ENCODE measurements at regions of chr15 and their contacts with region 1.

Region 1: GRCh38 chr15:75597667-75598341 is 18.7 kb upstream of the PTPN9 start:
- DNase-seq: peak; percentile 65
- H3K4me3 Mint-ChIP-seq: no peak overlapping the region
- H3K27ac Mint-ChIP-seq: peak overlapping the region; percentile 43
- H3K4me1 Mint-ChIP-seq: peaks cover 18% of the 10 kb centered on the region
- H3K27me3 Mint-ChIP-seq: no peaks in the 10 kb centered on the region

Region 2: DNA sequence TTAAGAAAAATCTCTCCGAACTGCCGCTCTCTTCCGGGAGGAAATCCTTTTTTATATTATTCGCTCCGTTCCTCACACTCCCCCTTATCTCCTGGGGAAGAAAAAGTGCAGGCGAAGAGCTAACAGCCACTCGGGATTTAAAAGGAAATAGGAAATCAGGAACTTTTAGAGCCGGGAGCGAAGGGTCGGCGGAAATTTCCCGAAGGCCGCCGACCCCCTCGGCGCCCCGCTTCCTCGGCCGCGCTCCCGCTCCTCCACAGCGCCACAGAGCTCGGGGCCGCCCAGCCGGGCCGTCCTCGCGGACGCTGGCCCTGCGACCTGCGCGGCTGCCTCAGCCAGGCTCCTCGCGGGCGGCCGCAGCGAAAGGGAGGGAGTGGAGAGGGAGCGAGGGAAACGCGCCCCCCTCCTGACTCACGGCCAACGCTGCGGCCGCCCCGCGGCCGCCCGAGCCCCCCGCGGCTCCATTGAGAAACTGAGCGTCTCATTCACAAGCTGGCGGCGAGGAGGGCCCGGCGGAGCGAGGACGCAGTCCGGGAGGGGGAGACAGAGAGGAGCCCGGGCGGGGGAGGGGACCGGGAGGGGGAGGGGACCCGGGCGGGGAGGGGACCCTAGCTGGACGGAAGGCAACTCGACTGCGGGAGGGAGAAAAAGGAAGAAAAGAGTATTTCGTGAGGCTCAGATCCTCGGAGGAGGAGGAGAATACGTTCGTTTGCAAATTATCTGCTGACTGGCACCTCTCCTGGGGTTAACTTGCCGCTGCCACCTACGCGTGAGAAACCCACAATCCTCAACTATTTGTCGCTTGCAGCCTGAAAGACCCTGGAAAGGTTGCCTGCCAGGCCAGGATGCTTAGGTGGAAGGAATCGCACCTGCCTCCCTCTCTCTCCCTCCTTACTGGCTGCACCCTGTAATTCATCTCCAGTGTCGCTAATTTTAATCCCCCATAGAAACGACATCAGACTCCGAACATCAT is 18.6 kb before region 1 on chr15 and contains the start of gene PTPN9:
- CTCF ChIA-PET with region 1: interaction called, 17 read pairs
- POLR2A ChIA-PET with region 1: interaction called, 18 read pairs
- intact Hi-C with region 1: no loop called
- DNase-seq: peak; percentile 84
- H3K4me3 Mint-ChIP-seq: peak within 1 kb of the TSS; percentile 91
- H3K27ac Mint-ChIP-seq: peak within 1 kb of the TSS; percentile 93
- H3K4me1 Mint-ChIP-seq: peaks cover 16% of the 10 kb centered on the region
- H3K27me3 Mint-ChIP-seq: no peaks in the 10 kb centered on the region
- total RNA-seq, gene PTPN9: 19.2 to 20.9 TPM

Region 3: DNA sequence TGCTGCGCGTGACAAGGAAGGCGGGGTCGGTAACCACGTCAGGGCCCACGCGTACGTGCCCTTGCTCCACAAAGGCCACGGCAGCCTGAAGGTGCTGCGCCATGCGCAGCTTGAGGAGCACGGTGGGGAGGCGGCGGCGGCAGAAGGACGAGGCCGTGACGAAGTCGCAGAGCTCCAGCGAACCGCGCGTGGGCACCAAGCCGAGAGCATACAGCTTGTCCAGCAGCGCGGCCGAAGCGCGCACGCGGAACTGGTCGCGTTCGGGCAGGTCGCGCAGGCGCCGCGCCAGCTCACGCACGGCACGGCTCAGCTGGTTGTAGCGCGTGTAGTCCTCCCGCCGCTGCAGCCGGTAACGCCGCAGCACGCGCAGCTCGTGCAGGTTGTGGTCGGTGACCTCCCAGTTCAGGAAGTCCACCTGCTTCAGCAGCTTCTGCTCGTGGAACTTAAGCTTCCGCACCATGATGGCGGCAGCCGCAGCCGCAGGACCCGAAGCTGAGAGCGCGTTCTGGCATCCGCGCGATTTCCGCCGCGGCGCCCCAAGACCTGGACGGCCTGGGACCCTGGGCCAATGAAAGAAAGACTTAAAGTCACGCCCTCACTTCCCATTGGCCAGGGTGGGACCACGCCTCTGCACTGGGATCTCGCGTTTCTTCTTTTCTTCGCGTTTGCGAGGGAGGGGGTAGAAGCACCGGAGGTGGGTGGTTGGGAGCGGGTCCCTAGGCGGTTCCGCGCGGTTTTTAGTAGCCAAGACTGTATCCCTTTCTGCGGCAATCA is 42.1 kb after region 1 on chr15 and contains the start of gene IMP3:
- CTCF ChIA-PET with region 1: interaction called, 19 read pairs
- POLR2A ChIA-PET with region 1: interaction called, 3 read pairs
- intact Hi-C with region 1: loop called (anchors 5 kb)
- DNase-seq: peak; percentile 98
- H3K4me3 Mint-ChIP-seq: peak within 1 kb of the TSS; percentile 86
- H3K27ac Mint-ChIP-seq: peak within 1 kb of the TSS; percentile 86
- H3K4me1 Mint-ChIP-seq: peaks cover 27% of the 10 kb centered on the region
- H3K27me3 Mint-ChIP-seq: no peaks in the 10 kb centered on the region
- total RNA-seq, gene IMP3: 71.7 to 72.4 TPM

Region 4: DNA sequence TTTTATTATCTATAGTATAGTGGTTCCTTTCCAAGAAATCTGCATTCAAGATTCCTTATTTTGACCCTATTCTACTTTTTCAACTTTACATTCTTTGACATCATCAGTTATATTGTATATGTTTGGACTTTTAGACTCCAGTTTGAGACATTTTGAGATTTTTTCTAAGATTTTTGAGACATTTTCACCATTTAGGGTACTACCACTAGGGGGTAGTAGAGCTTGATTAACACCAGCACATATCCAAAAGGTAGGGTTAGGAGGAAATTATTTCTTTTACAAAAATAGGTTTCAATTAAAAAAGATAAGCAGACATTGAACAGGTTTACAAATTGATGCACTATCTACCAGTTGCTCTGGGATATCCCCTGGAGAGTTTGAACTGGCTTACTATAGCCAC is 1044.9 kb after region 1 on chr15:
- CTCF ChIA-PET with region 1: no interaction called
- POLR2A ChIA-PET with region 1: no interaction called
- intact Hi-C with region 1: no loop called
- DNase-seq: no peak
- H3K4me3 Mint-ChIP-seq: no peak overlapping the region
- H3K27ac Mint-ChIP-seq: no peak overlapping the region
- H3K4me1 Mint-ChIP-seq: no peaks in the 10 kb centered on the region
- H3K27me3 Mint-ChIP-seq: no peaks in the 10 kb centered on the region